Caco-2 (cell line): ENCODE measurements at regions of chr17 and their contacts with region 1.

Region 1: DNA sequence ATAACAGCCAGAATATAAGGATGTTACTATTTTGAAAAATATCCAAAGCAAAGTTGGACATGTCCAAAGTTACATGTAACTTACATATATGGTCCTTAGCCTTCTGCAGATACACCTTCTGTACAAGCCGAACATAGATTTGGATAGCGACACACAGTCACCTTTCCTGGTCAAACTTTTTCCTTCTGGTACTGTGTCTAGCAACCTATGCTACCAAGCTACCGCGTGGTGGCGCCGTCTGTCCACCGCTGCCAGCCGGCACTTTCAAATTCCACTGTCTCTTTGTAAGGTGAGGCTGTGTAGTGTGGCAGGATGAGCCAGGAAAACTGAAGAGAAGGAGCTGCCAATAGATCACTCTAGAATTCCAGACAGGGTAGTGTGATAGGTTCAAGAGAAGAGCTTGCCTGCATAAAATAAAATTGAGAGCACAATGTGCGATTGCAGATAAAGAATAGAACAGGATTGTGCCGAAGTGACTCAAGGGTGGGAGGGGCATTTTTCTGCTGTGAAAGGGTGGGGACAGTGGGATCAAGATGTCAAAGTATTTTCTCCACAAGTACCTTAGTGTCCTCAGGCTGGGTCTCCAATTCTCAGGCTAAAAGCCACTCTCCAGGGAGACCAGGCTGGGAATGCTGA is 366.9 kb downstream of the SLC39A11 start:
- DNase-seq: peak; percentile 62 to 78
- H3K4me3 ChIP-seq: no peak overlapping the region
- H3K4me3 Mint-ChIP-seq: no peak overlapping the region
- H3K27ac Mint-ChIP-seq: no peak overlapping the region
- H3K4me1 ChIP-seq: no peaks in the 10 kb centered on the region
- H3K4me1 Mint-ChIP-seq: peaks cover 12% of the 10 kb centered on the region
- H3K27me3 ChIP-seq: no peaks in the 10 kb centered on the region; the same call in 1 of the 2 replicates
- H3K27me3 Mint-ChIP-seq: no peaks in the 10 kb centered on the region
- CTCF ChIP-seq: peak; percentile 95 to 97

Region 2: GRCh38 chr17:72985881-72986720 is 260.6 kb after region 1 on chr17:
- CTCF ChIA-PET with region 1: interaction called, 17 read pairs
- POLR2A ChIA-PET with region 1: no interaction called
- intact Hi-C with region 1: loop called (anchors 1 kb)
- DNase-seq: peak; percentile 74 to 86
- H3K4me3 ChIP-seq: no peak overlapping the region
- H3K4me3 Mint-ChIP-seq: no peak overlapping the region
- H3K27ac Mint-ChIP-seq: no peak overlapping the region
- H3K4me1 ChIP-seq: no peaks in the 10 kb centered on the region
- H3K4me1 Mint-ChIP-seq: no peaks in the 10 kb centered on the region
- H3K27me3 ChIP-seq: no peaks in the 10 kb centered on the region
- H3K27me3 Mint-ChIP-seq: no peaks in the 10 kb centered on the region
- CTCF ChIP-seq: peak; percentile 89 to 93

Region 3: DNA sequence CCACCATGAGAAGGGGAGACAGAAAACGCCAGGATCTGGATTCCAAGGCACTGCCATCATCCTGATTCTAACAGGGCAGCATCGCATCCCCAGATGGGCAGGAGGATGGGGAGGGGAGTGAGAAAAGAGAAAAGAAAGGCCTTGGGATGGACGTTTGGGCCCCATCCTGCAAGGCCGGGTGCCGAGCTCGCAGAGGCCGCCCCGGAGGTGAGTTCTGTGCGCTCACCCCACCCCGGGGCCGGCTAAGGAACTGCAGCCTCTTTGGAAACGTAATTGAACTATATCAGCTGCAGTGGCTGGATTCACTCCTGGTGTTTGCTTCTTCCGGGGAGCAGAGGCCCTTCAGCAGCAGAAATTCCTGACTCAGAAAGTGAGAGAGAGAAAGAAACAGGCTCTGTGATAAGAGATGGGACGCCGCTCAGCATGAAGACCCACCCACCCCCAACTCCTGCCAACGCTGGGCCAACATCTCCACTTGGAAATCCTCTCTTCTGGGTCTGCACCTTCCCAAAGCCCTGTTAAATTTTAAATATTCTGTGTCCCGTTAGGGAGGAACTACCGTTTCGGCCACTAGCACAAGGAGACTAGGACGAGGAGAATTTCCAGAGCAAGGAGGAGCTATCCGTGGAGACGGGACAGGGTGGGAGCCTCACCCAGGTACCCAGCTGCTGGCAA is 430.8 kb after region 1 on chr17:
- CTCF ChIA-PET with region 1: interaction called, 14 read pairs
- POLR2A ChIA-PET with region 1: no interaction called
- intact Hi-C with region 1: loop called (anchors 1 kb)
- DNase-seq: peak; percentile 71 to 77
- H3K4me3 ChIP-seq: no peak overlapping the region
- H3K4me3 Mint-ChIP-seq: no peak overlapping the region
- H3K27ac Mint-ChIP-seq: no peak overlapping the region
- H3K4me1 ChIP-seq: peaks cover 19% of the 10 kb centered on the region
- H3K4me1 Mint-ChIP-seq: peaks cover 19% of the 10 kb centered on the region
- H3K27me3 ChIP-seq: no peaks in the 10 kb centered on the region
- H3K27me3 Mint-ChIP-seq: no peaks in the 10 kb centered on the region
- CTCF ChIP-seq: peak; percentile 87

Region 4: DNA sequence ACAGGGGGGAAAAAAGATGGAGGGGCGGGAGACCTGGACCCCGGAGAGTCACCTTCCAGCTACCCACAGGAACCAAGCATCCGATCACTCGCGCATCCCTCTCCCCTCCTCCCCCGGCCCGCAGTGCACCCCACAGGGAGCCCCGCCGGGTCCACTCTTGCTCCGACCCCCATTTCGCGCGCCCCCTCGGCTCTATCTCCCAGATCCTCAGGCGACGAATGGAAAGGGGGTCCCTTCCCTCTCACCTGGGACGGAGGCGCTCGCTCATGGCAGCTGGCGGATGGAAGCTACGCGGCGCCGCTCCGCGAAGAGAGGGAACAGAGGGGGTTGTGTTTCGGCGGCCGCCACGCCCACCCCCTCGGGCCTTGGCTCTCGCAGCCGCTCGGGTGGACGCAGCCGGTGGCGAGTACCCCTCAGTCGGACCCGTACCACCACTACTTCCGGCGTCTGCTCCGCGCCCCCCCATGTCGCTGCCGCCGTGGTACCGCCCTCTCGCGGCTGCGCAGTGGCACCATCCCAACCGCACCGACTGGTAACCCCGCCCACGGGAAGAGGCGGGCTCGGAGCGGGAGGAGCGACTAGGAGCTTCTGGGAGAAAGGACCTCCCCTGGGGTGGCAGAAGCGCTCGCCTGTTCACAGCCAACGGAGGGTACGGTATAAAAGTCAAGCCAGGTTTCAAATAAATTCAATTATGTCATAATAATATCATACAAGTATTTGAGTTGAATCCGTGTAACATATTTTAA is 506.5 kb after region 1 on chr17:
- CTCF ChIA-PET with region 1: interaction called, 6 read pairs
- POLR2A ChIA-PET with region 1: interaction called, 3 read pairs
- intact Hi-C with region 1: loop called (anchors 5 kb)
- DNase-seq: peak; percentile 96 to 98
- H3K4me3 ChIP-seq: peak overlapping the region; percentile 84
- H3K4me3 Mint-ChIP-seq: peak overlapping the region; percentile 92
- H3K27ac Mint-ChIP-seq: peak overlapping the region; percentile 98
- H3K4me1 ChIP-seq: peaks cover 23% of the 10 kb centered on the region
- H3K4me1 Mint-ChIP-seq: peaks cover 12% of the 10 kb centered on the region
- H3K27me3 ChIP-seq: no peaks in the 10 kb centered on the region
- H3K27me3 Mint-ChIP-seq: no peaks in the 10 kb centered on the region
- CTCF ChIP-seq: peak in 1 of 2 experiments; percentile 32

Region 5: DNA sequence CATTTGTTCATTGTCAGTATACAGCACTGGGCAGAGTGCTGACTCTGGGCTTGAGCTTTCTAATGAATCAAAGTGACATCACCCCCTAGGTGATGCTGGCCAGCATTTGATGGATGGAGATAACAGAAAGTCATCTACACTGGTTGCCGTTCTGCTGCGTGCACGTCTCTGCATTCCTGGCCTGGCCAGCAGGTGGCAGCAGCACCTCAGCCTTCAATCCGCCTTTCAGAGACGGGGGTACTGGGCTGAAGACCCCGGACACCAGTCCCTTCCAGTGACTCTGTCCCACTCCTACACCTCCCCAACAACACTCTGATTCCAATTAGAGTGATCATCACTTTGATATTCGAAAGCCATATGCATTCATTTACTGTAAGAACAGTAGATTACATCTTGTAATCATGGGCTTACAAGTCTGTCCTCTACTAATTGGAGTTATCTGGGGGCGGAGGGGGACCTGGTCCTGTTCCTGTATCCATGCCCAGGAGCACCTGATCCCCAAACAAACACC is 530.2 kb after region 1 on chr17:
- CTCF ChIA-PET with region 1: no interaction called
- POLR2A ChIA-PET with region 1: no interaction called
- intact Hi-C with region 1: loop called (anchors 2 kb)
- DNase-seq: peak in 1 of 2 experiments; percentile 67
- H3K4me3 ChIP-seq: no peak overlapping the region
- H3K4me3 Mint-ChIP-seq: no peak overlapping the region
- H3K27ac Mint-ChIP-seq: no peak overlapping the region
- H3K4me1 ChIP-seq: no peaks in the 10 kb centered on the region
- H3K4me1 Mint-ChIP-seq: no peaks in the 10 kb centered on the region
- H3K27me3 ChIP-seq: no peaks in the 10 kb centered on the region
- H3K27me3 Mint-ChIP-seq: no peaks in the 10 kb centered on the region
- CTCF ChIP-seq: peak; percentile 95 to 98

Region 6: DNA sequence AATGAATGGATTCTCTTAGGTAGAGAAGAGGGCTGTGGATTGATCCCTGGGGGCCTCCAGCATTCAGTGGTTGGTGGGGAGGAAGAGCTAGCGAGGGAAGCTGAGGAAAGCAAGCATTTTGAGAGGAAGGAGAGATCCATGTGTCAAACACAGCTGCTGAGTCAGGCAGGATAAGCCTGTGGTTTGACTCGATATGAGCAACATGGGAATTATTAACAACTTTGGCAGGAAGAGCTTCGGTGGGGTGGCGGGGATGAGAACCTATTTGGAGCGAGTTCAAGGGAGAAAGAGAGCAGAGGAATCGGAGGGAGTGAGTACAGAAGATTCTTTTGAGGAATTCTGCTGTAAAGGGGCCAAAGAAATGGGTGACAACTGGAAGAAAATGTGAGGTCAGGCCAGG is 645.7 kb after region 1 on chr17:
- CTCF ChIA-PET with region 1: interaction called, 16 read pairs
- POLR2A ChIA-PET with region 1: no interaction called
- intact Hi-C with region 1: loop called (anchors 1 kb)
- DNase-seq: no peak
- H3K4me3 ChIP-seq: no peak overlapping the region
- H3K4me3 Mint-ChIP-seq: no peak overlapping the region
- H3K27ac Mint-ChIP-seq: no peak overlapping the region
- H3K4me1 ChIP-seq: no peaks in the 10 kb centered on the region
- H3K4me1 Mint-ChIP-seq: no peaks in the 10 kb centered on the region
- H3K27me3 ChIP-seq: no peaks in the 10 kb centered on the region; the same call in none of the 2 replicates
- H3K27me3 Mint-ChIP-seq: peaks cover 22% of the 10 kb centered on the region
- CTCF ChIP-seq: no peak